ENCODE measurements at regions of chr9 and their contacts with region 1.

Region 1: GRCh38 chr9:33264473-33265177 is at the starts of genes BAG1 and CHMP5:
- DNase-seq: peak; percentile 99
- ATAC-seq: peak; percentile 98
- H3K4me3 Mint-ChIP-seq: peak within 1 kb of the TSS; percentile 93
- H3K27ac Mint-ChIP-seq: peak within 1 kb of the TSS; percentile 97
- H3K4me1 Mint-ChIP-seq: peaks cover 39% of the 10 kb centered on the region
- H3K27me3 Mint-ChIP-seq: no peaks in the 10 kb centered on the region
- CTCF ChIP-seq: no peak
- total RNA-seq, gene BAG1: 58.3 and 58.9 TPM in 2 replicates
- total RNA-seq, gene CHMP5: 27.4 and 28.1 TPM in 2 replicates

Region 2: GRCh38 chr9:33124751-33125381 is 139.8 kb before region 1 on chr9:
- CTCF ChIA-PET with region 1: no interaction called
- POLR2A ChIA-PET with region 1: no interaction called
- intact Hi-C with region 1: loop called (anchors 1 kb)
- DNase-seq: no peak
- ATAC-seq: peak; percentile 72
- H3K4me3 Mint-ChIP-seq: peak overlapping the region; percentile 74
- H3K27ac Mint-ChIP-seq: peak overlapping the region; percentile 96
- H3K4me1 Mint-ChIP-seq: peaks cover 88% of the 10 kb centered on the region
- H3K27me3 Mint-ChIP-seq: no peaks in the 10 kb centered on the region
- CTCF ChIP-seq: no peak

Region 3: GRCh38 chr9:33202552-33203201 is 61.9 kb before region 1 on chr9:
- CTCF ChIA-PET with region 1: no interaction called
- POLR2A ChIA-PET with region 1: no interaction called
- intact Hi-C with region 1: loop called (anchors 2 kb)
- DNase-seq: peak; percentile 67
- ATAC-seq: peak; percentile 98
- H3K4me3 Mint-ChIP-seq: peak overlapping the region; percentile 78
- H3K27ac Mint-ChIP-seq: peak overlapping the region; percentile 83
- H3K4me1 Mint-ChIP-seq: peaks cover 24% of the 10 kb centered on the region
- H3K27me3 Mint-ChIP-seq: peaks cover 1% of the 10 kb centered on the region
- CTCF ChIP-seq: no peak

Region 4: DNA sequence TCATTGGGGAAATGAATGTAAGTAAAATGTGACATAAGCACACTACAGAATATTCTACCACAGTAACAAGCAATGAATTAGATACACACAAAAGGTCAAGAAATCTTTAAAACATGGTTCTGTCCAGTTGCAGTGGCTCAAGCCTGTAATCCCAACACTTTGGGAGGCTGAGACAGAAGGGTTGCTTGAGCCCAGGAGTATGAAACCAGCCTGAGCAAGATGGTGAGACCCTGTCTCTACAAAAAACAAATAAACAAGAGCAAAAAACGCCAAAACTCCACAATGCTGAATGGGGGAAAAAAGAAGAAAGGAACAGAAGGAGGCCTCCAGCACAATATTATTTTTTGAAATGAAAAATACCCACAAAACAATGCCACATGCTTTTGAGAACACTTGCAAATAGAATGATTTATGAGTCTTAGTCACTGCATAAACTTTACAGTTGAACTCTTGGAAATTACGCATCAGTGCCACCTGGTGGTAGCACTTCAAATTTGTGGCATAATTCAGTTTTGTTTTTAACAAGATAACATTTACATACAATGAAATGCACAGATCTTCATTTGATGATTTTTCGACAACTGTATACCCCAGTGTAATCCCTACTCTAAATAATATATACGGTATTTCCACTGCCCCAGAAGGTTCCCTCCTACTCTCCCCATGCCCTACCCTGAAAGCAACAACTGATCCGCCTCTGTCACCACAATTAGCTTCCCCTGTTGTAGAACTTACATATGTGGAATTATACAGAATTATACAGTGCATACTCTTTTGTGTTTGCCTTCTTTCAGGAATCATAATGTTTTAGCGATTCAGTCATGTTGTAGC is 39.1 kb before region 1 on chr9:
- CTCF ChIA-PET with region 1: no interaction called
- POLR2A ChIA-PET with region 1: interaction called, 15 read pairs
- intact Hi-C with region 1: loop called (anchors 1 kb)
- DNase-seq: no peak
- ATAC-seq: peak; percentile 33
- H3K4me3 Mint-ChIP-seq: no peak overlapping the region
- H3K27ac Mint-ChIP-seq: peak overlapping the region; percentile 4
- H3K4me1 Mint-ChIP-seq: peaks cover 51% of the 10 kb centered on the region
- H3K27me3 Mint-ChIP-seq: no peaks in the 10 kb centered on the region
- CTCF ChIP-seq: no peak

Region 5: GRCh38 chr9:33473643-33474352 is 209.2 kb after region 1 on chr9 and contains the start of gene NOL6:
- CTCF ChIA-PET with region 1: no interaction called
- POLR2A ChIA-PET with region 1: interaction called, 3 read pairs
- intact Hi-C with region 1: loop called (anchors 1 kb)
- DNase-seq: peak; percentile 93
- ATAC-seq: peak; percentile 99
- H3K4me3 Mint-ChIP-seq: peak within 1 kb of the TSS; percentile 99
- H3K27ac Mint-ChIP-seq: peak within 1 kb of the TSS; percentile 94
- H3K4me1 Mint-ChIP-seq: peaks cover 28% of the 10 kb centered on the region
- H3K27me3 Mint-ChIP-seq: no peaks in the 10 kb centered on the region
- CTCF ChIP-seq: no peak
- total RNA-seq, gene NOL6: 59.9 and 60.1 TPM in 2 replicates

Measured in activated B cell treated with CpG ODN at 0.5 μM for 24 hours (primary cell).